ENCODE measurements at regions of chr16 and their contacts with region 1.

Region 1: DNA sequence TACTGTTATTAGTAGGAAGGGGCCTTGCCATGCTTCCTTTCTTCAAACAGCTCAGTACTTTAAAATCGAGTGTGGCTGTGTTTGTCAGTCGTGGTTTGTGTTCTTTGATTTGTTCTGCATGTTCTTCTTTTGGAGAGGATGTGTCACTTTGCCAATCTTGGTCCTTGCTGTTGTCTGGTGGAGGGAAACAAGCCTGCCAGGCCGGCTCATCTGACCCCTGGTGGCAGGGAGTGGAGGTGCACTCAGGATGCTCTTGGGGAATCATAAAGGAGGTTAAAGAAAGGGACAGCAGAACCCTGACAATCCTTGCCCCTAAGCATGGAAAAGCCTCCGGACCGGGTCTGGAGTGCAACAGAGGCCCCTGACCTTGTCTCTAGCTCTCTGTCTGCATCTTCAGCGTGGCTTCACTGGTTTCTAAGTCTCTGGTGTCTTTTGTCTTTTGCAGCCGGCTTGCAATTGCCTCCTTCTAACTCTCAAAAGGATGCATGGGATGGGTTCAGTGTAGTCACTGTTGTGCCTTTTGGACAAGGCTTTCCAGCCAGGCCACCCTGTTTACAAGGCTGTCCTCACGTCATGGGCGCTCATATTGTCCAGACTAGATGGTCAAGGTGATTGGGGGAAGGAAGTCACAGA is 135.8 kb downstream of the WWOX start:
- DNase-seq: peak; percentile 73
- CTCF ChIP-seq: peak; percentile 82

Region 2: DNA sequence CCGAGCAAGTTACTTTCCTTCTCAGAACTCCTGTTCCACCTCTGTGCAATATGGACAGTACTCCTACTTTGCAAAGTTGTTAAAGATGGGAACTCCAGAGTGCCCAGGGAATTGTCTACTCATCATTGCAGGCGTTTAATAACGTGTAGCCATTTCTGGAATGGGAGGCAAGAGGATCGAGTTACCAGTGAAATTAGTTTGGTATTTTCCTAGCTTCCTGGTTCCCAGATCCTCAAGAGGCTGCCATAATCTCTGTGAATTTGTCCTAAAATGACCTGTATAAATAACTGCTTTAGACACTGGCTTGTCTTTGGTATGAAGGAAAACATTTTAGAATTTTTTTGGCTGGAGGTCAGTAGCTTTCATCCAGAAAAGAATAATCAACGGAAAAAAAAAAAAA is 108.2 kb before region 1 on chr16:
- in situ Hi-C with region 1: loop called (anchors 5 kb)
- DNase-seq: no peak
- CTCF ChIP-seq: no peak

Region 3: GRCh38 chr16:79137396-79137939 is 902.2 kb after region 1 on chr16:
- in situ Hi-C with region 1: no loop called
- DNase-seq: no peak
- CTCF ChIP-seq: no peak

Measured in GM13976 (cell line).